Aorta (tissue), 5 donors: ENCODE measurements at regions of chr9 and their contacts with region 1.

Region 1: DNA sequence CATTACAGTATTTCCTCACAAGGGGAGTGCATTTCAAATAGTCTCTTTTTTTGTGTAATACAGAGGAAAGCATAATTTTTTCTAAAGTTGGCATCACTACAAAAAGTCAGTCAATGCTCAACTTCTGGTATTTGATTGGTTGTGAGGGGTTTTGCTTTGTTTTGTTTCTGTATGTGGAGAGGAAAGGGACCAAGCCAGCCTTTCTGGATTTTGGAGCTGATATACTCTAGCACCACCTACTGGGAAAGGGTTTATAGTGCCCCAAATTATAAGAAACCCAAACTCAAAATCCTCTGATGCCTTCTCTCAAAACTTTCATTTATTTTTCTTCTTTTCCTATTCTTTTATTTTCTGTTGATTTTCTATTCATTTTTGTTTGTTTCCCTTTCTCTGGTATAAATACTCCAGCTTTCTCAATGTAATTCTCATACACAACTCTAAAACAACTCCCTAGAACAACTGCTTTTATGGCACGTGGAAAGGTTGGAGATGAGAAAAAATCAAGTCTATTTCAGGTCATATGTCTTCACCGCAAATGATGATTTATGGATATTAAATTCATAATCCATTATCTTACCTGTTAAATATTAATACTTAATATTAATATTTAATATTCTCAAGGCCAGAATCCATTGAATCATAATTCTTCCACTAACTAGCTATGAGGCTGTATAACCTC is 69.5 kb upstream of the ANXA1 start:
- DNase-seq: no peak
- ATAC-seq: peak; percentile 82
- H3K4me3 ChIP-seq: no peak overlapping the region
- H3K27ac ChIP-seq: no peak overlapping the region
- H3K4me1 ChIP-seq: peaks cover 0 to 2% of the 10 kb centered on the region in 2 donors
- H3K27me3 ChIP-seq: no peaks in the 10 kb centered on the region

Region 2: GRCh38 chr9:72856972-72857623 is 225.0 kb before region 1 on chr9:
- intact Hi-C with region 1: loop called (anchors 2 kb)
- DNase-seq: no peak
- ATAC-seq: peak; percentile 88
- H3K4me3 ChIP-seq: no peak overlapping the region
- H3K27ac ChIP-seq: no peak overlapping the region
- H3K4me1 ChIP-seq: peaks cover 2 to 11% of the 10 kb centered on the region in 2 donors
- H3K27me3 ChIP-seq: no peaks in the 10 kb centered on the region

Region 3: GRCh38 chr9:72952914-72953313 is 129.2 kb before region 1 on chr9 and contains the start of gene ALDH1A1:
- intact Hi-C with region 1: loop called in 1 of 2 experiments (anchors 5 kb)
- DNase-seq: no peak
- ATAC-seq: peak; percentile 74
- H3K4me3 ChIP-seq: peak within 1 kb of the TSS; percentile 94 to 99
- H3K27ac ChIP-seq: peak within 1 kb of the TSS; percentile 68 to 76
- H3K4me1 ChIP-seq: peaks cover 0 to 1% of the 10 kb centered on the region in 2 donors
- H3K27me3 ChIP-seq: no peaks in the 10 kb centered on the region
- total RNA-seq, gene ALDH1A1: 107 to 118 TPM

Region 4: GRCh38 chr9:73038613-73039012 is 43.5 kb before region 1 on chr9:
- intact Hi-C with region 1: loop called in 1 of 2 experiments (anchors 5 kb)
- DNase-seq: peak; percentile 54 to 72
- ATAC-seq: peak; percentile 81
- H3K4me3 ChIP-seq: no peak overlapping the region
- H3K27ac ChIP-seq: peak overlapping the region; percentile 67 to 97
- H3K4me1 ChIP-seq: peaks cover 0 to 10% of the 10 kb centered on the region in 2 donors
- H3K27me3 ChIP-seq: no peaks in the 10 kb centered on the region